ENCODE measurements at regions of chr1 and their contacts with region 1.

Region 1: GRCh38 chr1:234499119-234499942 is 20.4 kb upstream of the TARBP1 start:
- DNase-seq: peak; percentile 89 to 95 (median 91)
- ATAC-seq: peak; percentile 93 to 98 (median 96)
- H3K4me3 ChIP-seq: peak overlapping the region in 7 of 12 donors; percentile 4 to 22 (median 9)
- H3K27ac ChIP-seq: peak overlapping the region; percentile 51 to 94 (median 86)
- H3K4me1 ChIP-seq: peaks cover 0 to 43% (median 22%) of the 10 kb centered on the region in 12 donors
- H3K27me3 ChIP-seq: no peaks in the 10 kb centered on the region
- CTCF ChIP-seq: peak; percentile 90 to 98 (median 96)
- POLR2A ChIP-seq: peak in 1 of 2 donors; percentile 20

Region 2: GRCh38 chr1:234515821-234516241 is 16.5 kb after region 1 on chr1:
- intact Hi-C with region 1: no loop called
- DNase-seq: no peak
- ATAC-seq: no peak
- H3K4me3 ChIP-seq: no peak overlapping the region
- H3K27ac ChIP-seq: peak overlapping the region in 8 of 12 donors; percentile 4 to 63 (median 44)
- H3K4me1 ChIP-seq: peaks cover 0 to 54% (median 14%) of the 10 kb centered on the region in 12 donors
- H3K27me3 ChIP-seq: no peaks in the 10 kb centered on the region
- CTCF ChIP-seq: no peak
- POLR2A ChIP-seq: no peak

Region 3: DNA sequence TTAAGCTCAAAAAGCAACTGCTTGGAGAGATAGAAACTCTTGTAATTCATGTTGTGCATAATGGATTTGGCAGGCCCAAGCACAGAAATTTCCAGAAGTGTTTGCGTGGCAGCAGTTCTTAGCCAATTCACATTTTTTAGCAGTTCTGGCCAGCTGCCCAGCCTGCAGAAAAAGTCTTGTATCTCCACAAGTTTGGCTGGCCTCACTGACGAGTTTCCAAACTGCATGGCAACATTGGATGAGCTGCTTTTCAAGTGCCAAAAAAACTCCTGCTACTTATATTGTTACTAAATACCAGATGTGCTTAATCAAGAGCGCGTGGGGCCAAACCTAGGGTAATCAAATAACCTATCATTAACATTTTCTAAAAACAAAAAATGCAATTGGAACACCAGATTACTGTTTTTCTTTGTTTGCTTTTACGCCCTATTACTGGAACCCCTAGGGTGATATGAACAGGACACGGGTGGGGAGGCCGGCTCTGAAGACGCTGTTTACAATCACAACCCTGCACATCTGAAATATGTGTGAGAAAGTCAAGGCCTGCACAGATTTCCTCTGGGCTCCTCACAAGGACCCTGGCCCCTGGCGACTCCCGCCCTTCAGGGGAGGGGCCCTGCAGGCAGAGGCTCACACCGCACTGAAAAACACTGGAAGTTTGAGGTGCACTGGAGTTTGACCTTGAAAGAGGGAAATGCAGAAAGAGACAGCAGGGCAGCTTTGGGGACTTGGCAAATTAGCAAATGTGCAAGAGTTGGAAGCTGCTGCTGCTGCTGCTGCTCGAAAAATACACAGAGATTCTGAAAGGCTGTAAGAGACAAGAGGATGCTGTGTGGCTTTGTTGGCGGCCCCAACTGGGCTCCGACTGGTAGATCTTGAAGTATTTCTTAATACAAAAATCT is 34.9 kb after region 1 on chr1:
- intact Hi-C with region 1: loop called in 2 of 10 experiments (anchors 5 kb)
- DNase-seq: peak; percentile 93 to 97 (median 94)
- ATAC-seq: peak; percentile 7 to 19 (median 16)
- H3K4me3 ChIP-seq: peak overlapping the region in 1 of 12 donors; percentile 13
- H3K27ac ChIP-seq: peak overlapping the region; percentile 91 to 99 (median 98)
- H3K4me1 ChIP-seq: peaks cover 35 to 100% (median 98%) of the 10 kb centered on the region in 12 donors
- H3K27me3 ChIP-seq: no peaks in the 10 kb centered on the region
- CTCF ChIP-seq: no peak
- POLR2A ChIP-seq: no peak

Region 4: GRCh38 chr1:234699795-234700665 is 200.7 kb after region 1 on chr1:
- intact Hi-C with region 1: loop called in 2 of 10 experiments (anchors 10 kb)
- DNase-seq: peak in 2 of 5 donors; percentile 50 to 59
- ATAC-seq: peak in 3 of 4 donors; percentile 30 to 76 (median 38)
- H3K4me3 ChIP-seq: no peak overlapping the region
- H3K27ac ChIP-seq: peak overlapping the region in 10 of 12 donors; percentile 1 to 79 (median 56)
- H3K4me1 ChIP-seq: peaks cover 0 to 32% (median 18%) of the 10 kb centered on the region in 12 donors
- H3K27me3 ChIP-seq: no peaks in the 10 kb centered on the region
- CTCF ChIP-seq: no peak
- POLR2A ChIP-seq: no peak

Region 5: DNA sequence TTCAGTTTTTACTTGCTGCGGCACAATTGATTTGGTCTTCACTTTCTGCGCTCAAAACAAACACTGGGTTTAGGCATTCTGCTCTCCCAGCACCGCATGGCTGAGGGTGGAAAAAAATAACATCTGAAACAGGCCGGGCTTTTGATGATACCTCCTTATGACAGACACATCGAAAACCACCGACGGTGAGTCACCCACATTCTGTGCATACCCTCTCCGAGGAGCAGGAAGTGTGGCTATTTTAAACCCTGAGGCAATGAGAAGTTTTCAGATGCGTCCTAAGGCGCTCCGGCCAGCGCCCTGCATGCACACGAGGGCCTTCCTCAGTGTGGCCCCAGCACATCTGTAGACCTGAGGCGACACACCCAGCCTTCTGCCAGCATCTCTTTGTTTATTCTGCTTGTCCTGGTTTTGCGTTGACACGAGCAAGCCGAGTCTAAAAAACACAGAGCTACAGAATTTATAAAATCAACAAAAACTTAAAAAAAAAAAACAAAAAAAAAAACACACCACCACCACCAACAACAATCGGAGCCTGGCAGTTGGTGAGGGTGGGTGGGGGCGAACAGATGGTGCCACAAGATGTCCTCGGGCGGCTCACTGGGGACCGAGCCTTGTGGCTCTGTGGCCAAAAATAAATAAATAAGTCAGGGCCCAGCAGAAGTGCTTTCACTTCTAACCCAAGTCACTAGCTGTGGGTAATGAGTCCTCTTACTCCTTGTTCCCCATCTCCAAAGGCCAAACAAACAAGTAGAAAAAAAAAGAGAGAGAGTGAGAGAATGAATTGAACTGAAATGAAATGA is 273.2 kb after region 1 on chr1:
- intact Hi-C with region 1: no loop called
- DNase-seq: peak; percentile 48 to 84 (median 61)
- ATAC-seq: peak; percentile 38 to 88 (median 80)
- H3K4me3 ChIP-seq: peak overlapping the region in 4 of 12 donors; percentile 15 to 25 (median 20)
- H3K27ac ChIP-seq: peak overlapping the region in 8 of 12 donors; percentile 4 to 92 (median 39)
- H3K4me1 ChIP-seq: peaks cover 0 to 66% (median 13%) of the 10 kb centered on the region in 12 donors
- H3K27me3 ChIP-seq: peaks cover 0 to 13% (median 7%) of the 10 kb centered on the region in 9 donors
- CTCF ChIP-seq: no peak
- POLR2A ChIP-seq: no peak

Region 6: DNA sequence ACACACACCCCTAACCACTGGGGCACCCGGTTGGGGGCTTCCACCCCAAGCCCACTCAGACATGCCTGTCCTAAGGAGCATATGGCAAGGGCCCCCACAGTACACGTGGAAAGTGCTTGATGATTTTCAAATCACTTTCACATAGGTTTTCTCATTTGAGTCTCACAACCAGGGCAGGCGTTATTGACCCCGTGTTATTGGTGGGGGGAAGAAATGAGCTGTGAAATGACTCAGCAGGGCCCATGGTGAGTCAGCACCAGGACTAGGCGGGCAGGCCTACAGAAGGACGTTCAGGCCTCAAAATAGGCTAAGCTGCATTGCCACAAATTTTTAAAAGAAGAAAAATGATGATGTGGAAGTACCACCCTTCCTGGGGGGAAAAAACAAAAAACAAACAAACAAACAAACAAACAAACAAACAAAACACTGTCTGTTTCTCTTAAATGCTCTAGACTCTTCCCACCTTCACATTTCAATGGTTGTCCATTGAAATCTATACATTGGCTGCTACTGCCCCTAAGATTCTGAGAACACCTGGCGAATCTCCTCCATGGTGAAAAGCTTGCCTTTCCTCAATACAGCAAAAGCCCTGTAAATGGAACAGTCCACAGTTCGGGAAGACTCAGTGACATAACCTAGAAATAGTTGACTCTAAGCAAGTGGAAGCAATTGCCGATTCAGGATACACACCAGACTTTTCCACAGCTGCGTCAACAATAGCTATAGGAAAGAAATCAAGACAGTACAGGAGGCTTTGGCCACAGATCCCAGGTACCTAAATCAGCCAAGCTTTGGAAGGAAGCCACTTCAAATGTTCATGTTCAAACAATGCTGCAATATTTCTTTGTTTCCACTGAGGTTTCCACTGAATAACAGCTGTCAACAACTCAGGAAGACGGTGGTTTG is 394.6 kb after region 1 on chr1:
- intact Hi-C with region 1: loop called in 1 of 10 experiments (anchors 10 kb)
- DNase-seq: no peak
- ATAC-seq: peak in 2 of 4 donors; percentile 13 to 44
- H3K4me3 ChIP-seq: no peak overlapping the region
- H3K27ac ChIP-seq: peak overlapping the region in 11 of 12 donors; percentile 21 to 68 (median 42)
- H3K4me1 ChIP-seq: peaks cover 2 to 48% (median 31%) of the 10 kb centered on the region in 12 donors
- H3K27me3 ChIP-seq: no peaks in the 10 kb centered on the region
- CTCF ChIP-seq: no peak
- POLR2A ChIP-seq: no peak

Region 7: DNA sequence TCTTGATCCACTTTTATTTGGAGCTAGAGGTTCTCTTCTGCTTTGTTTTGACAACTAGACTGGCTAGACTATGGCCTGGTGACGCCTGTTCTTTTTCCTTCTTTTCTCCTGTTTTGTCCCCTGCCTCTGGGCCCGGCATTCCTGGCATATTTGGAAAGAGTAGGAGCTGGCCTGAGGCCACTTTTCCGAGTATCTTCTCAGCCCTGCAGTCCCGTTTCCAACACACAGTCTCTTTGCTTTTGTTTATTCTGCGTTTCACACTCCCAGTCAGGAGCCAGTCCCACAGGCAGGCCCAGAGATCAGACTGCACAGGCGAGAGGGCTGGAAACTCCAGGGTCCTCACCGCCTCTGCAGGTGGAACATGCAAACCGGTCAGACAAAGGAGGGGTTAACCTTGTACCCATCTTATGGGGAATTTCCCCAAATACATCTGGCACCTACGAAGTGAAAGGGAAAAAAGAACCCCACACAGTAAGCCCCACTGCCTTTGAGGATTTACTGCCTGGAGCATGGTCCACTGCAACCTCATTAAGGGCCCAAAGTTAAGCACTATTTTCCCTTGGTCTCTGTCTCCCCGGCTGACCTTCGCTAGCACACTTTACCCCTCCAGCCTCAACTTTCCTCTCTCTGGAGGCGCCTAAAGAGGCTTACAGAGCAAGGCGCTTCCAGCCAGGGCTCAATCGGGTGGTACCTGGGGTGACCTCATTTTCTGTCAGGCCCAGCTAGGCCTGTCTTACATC is 488.3 kb after region 1 on chr1:
- intact Hi-C with region 1: loop called in 3 of 10 experiments (anchors 2 to 10 kb)
- DNase-seq: peak in 4 of 5 donors; percentile 65 to 76 (median 76)
- ATAC-seq: peak; percentile 81 to 92 (median 88)
- H3K4me3 ChIP-seq: no peak overlapping the region
- H3K27ac ChIP-seq: peak overlapping the region; percentile 79 to 98 (median 90)
- H3K4me1 ChIP-seq: peaks cover 15 to 66% (median 35%) of the 10 kb centered on the region in 12 donors
- H3K27me3 ChIP-seq: no peaks in the 10 kb centered on the region
- CTCF ChIP-seq: no peak
- POLR2A ChIP-seq: no peak

Region 8: DNA sequence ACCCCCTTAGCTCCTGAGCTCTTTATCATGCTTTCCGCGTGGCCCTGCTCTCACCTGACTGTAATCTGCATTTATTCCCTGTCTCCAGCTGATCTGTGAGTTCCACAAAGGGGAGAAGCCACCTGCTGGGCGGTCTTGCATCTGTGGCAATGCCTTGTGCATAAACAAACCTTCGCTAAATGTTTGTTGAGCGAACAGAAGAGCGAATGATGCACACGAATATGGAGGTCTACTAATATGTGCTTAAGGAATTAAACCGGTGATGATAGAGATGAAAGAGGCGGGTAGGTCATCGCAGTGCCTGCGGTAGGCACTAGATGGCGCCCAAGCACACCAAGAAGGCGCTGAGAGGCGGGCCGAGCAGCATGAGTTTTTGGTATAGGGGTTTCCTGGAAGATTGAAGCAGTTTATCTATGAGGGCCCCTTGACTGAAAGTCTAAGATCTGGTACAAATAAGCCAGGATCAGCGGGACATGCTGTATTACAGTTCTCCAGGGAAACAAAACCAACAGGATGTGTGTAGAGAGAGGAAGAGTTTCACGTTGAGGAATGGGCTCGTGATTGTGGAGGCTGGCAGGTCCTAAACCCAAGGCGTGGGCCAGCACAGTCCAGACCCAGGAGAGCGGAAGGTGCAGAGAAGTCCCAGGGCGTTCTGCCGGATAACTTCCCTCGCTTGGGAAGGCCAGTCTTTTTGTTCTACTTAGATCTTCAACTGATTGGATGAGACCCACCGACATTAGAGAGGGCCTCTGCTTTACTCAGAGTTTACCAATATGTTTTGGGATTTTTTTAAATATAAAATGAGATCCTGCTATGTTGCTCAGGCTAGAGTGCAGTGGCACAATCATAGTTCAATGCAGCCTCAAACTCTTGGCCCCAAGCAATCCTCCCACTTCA is 594.6 kb after region 1 on chr1:
- intact Hi-C with region 1: loop called in 4 of 10 experiments (anchors 1 to 5 kb)
- DNase-seq: peak; percentile 66 to 86 (median 71)
- ATAC-seq: peak; percentile 72 to 84 (median 81)
- H3K4me3 ChIP-seq: peak overlapping the region in 10 of 12 donors; percentile 9 to 50 (median 34)
- H3K27ac ChIP-seq: peak overlapping the region in 2 of 12 donors; percentile 11 to 50
- H3K4me1 ChIP-seq: peaks cover 0 to 14% (median 9%) of the 10 kb centered on the region in 12 donors
- H3K27me3 ChIP-seq: no peaks in the 10 kb centered on the region
- CTCF ChIP-seq: peak; percentile 78 to 95 (median 87)
- POLR2A ChIP-seq: no peak

Measured in heart left ventricle (tissue), 16 donors.